ENCODE measurements at regions of chr1 and their contacts with region 1.

Region 1: GRCh38 chr1:100485855-100486258 is 52.1 kb upstream of the GPR88 start:
- DNase-seq: no peak
- H3K4me3 ChIP-seq: no peak overlapping the region
- H3K4me3 Mint-ChIP-seq: no peak overlapping the region
- H3K27ac ChIP-seq: no peak overlapping the region
- H3K27ac Mint-ChIP-seq: peak overlapping the region in 1 of 7 donors; percentile 34
- H3K4me1 ChIP-seq: peaks cover 0 to 5% of the 10 kb centered on the region in 2 donors
- H3K4me1 Mint-ChIP-seq: peaks cover 5% of the 10 kb centered on the region
- H3K27me3 ChIP-seq: no peaks in the 10 kb centered on the region
- H3K27me3 Mint-ChIP-seq: no peaks in the 10 kb centered on the region
- CTCF ChIP-seq: no peak

Region 2: GRCh38 chr1:100107696-100108095 is 378.2 kb before region 1 on chr1:
- intact Hi-C with region 1: no loop called
- DNase-seq: no peak
- H3K4me3 ChIP-seq: no peak overlapping the region
- H3K4me3 Mint-ChIP-seq: no peak overlapping the region
- H3K27ac ChIP-seq: no peak overlapping the region
- H3K27ac Mint-ChIP-seq: no peak overlapping the region
- H3K4me1 ChIP-seq: no peaks in the 10 kb centered on the region
- H3K4me1 Mint-ChIP-seq: no peaks in the 10 kb centered on the region
- H3K27me3 ChIP-seq: no peaks in the 10 kb centered on the region
- H3K27me3 Mint-ChIP-seq: no peaks in the 10 kb centered on the region
- CTCF ChIP-seq: no peak

Region 3: GRCh38 chr1:100308777-100309176 is 177.1 kb before region 1 on chr1:
- intact Hi-C with region 1: no loop called
- DNase-seq: peak in 1 of 3 donors; percentile 36
- H3K4me3 ChIP-seq: no peak overlapping the region
- H3K4me3 Mint-ChIP-seq: no peak overlapping the region
- H3K27ac ChIP-seq: no peak overlapping the region
- H3K27ac Mint-ChIP-seq: no peak overlapping the region
- H3K4me1 ChIP-seq: no peaks in the 10 kb centered on the region
- H3K4me1 Mint-ChIP-seq: peaks cover 9% of the 10 kb centered on the region
- H3K27me3 ChIP-seq: no peaks in the 10 kb centered on the region
- H3K27me3 Mint-ChIP-seq: peaks cover 0 to 1% (median 0%) of the 10 kb centered on the region in 3 donors
- CTCF ChIP-seq: no peak

Region 4: DNA sequence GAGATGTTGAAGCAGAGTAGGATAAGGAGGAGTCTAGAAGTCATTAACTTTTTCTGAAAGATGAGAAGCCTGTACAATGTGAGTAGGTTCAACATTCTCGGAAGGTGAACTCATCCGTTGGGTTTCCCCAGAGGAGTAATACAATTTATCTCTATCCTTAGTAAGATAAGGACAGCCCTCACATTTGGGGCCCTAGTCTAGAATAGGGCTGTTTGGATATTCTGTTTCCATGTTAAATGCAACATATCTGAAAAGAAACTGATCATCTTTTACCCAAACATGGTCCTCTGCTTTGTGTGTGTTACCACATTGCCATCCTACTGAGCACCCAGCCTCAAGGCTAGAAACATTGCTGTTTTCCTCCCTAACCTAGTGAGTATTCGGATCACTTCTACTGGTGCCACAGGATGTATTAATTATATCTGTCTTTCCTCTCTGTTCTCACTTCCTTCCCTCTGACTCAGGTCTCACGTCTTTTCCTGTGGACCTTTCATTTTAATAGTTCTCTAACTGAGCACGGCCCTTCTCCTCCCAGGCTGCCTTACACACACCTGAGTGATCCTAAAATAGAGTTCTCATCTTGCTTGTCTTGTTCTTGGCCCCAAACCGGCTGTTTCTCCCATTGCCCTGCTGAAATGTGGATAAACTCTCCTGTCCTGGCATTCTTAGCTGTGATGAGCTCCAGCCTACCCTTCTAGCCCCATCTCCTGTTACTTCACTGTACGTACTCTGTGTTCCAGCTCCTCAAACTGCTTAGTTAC is 41.9 kb before region 1 on chr1:
- intact Hi-C with region 1: no loop called
- DNase-seq: no peak
- H3K4me3 ChIP-seq: no peak overlapping the region
- H3K4me3 Mint-ChIP-seq: no peak overlapping the region
- H3K27ac ChIP-seq: no peak overlapping the region
- H3K27ac Mint-ChIP-seq: peak overlapping the region in 3 of 7 donors; percentile 10 to 79 (median 63)
- H3K4me1 ChIP-seq: peaks cover 0 to 6% of the 10 kb centered on the region in 2 donors
- H3K4me1 Mint-ChIP-seq: peaks cover 19% of the 10 kb centered on the region
- H3K27me3 ChIP-seq: no peaks in the 10 kb centered on the region
- H3K27me3 Mint-ChIP-seq: no peaks in the 10 kb centered on the region
- CTCF ChIP-seq: no peak

Region 5: GRCh38 chr1:100543640-100544039 is 57.8 kb after region 1 on chr1:
- intact Hi-C with region 1: loop called in 1 of 2 experiments (anchors 10 kb)
- DNase-seq: peak in 2 of 3 donors; percentile 53 to 59
- H3K4me3 ChIP-seq: no peak overlapping the region
- H3K4me3 Mint-ChIP-seq: no peak overlapping the region
- H3K27ac ChIP-seq: no peak overlapping the region
- H3K27ac Mint-ChIP-seq: no peak overlapping the region
- H3K4me1 ChIP-seq: peaks cover 12 to 18% of the 10 kb centered on the region in 2 donors
- H3K4me1 Mint-ChIP-seq: peaks cover 10% of the 10 kb centered on the region
- H3K27me3 ChIP-seq: peaks cover 12 to 15% of the 10 kb centered on the region in 2 donors
- H3K27me3 Mint-ChIP-seq: peaks cover 15 to 22% (median 20%) of the 10 kb centered on the region in 3 donors
- CTCF ChIP-seq: peak; percentile 69